Adrenal gland (tissue), 19 donors: ENCODE measurements at regions of chr2 and their contacts with region 1.

Region 1: GRCh38 chr2:203484266-203485112 is 50.6 kb downstream of the RAPH1 start:
- DNase-seq: peak in 5 of 7 donors; percentile 25 to 47 (median 33)
- H3K4me3 ChIP-seq: no peak overlapping the region
- H3K27ac ChIP-seq: no peak overlapping the region
- H3K4me1 ChIP-seq: no peaks in the 10 kb centered on the region
- H3K27me3 ChIP-seq: no peaks in the 10 kb centered on the region
- CTCF ChIP-seq: peak; percentile 28 to 74 (median 64)
- POLR2A ChIP-seq: no peak

Region 2: GRCh38 chr2:203814661-203815540 is 330.4 kb after region 1 on chr2:
- intact Hi-C with region 1: loop called in 1 of 2 experiments (anchors 5 kb)
- DNase-seq: peak; percentile 31 to 81 (median 56)
- H3K4me3 ChIP-seq: no peak overlapping the region
- H3K27ac ChIP-seq: peak overlapping the region in 2 of 5 donors; percentile 6 to 65
- H3K4me1 ChIP-seq: peaks cover 0 to 20% of the 10 kb centered on the region in 2 donors
- H3K27me3 ChIP-seq: no peaks in the 10 kb centered on the region
- CTCF ChIP-seq: peak; percentile 68 to 87 (median 82)
- POLR2A ChIP-seq: no peak

Region 3: GRCh38 chr2:204069421-204070203 is 585.1 kb after region 1 on chr2:
- intact Hi-C with region 1: no loop called
- DNase-seq: no peak
- H3K4me3 ChIP-seq: no peak overlapping the region
- H3K27ac ChIP-seq: no peak overlapping the region
- H3K4me1 ChIP-seq: no peaks in the 10 kb centered on the region
- H3K27me3 ChIP-seq: peaks cover 5% of the 10 kb centered on the region
- CTCF ChIP-seq: no peak
- POLR2A ChIP-seq: no peak

Region 4: DNA sequence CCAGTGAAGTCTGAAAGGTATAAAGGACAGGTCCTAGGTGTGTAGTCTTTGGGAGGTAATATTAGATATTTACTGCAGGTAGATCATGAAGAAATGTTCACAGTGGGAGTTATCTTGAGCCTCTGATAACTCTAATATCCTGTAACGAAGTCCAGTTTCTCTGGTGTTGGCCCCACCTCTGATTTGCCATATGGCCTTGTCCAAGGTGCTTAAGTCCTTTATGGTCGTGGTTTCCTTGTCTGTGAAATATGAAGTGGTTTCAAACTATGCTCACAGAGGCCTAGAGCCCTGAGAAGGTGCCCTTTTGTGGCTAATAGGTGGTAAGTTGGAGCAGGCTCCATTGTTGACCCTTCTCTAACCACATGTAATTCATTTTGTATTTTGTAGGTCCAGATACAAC is 642.7 kb after region 1 on chr2:
- intact Hi-C with region 1: no loop called
- DNase-seq: no peak
- H3K4me3 ChIP-seq: no peak overlapping the region
- H3K27ac ChIP-seq: no peak overlapping the region
- H3K4me1 ChIP-seq: no peaks in the 10 kb centered on the region
- H3K27me3 ChIP-seq: peaks cover 2% of the 10 kb centered on the region
- CTCF ChIP-seq: no peak
- POLR2A ChIP-seq: no peak